BJ (cell line): ENCODE measurements at regions of chr5 and their contacts with region 1.

Region 1: DNA sequence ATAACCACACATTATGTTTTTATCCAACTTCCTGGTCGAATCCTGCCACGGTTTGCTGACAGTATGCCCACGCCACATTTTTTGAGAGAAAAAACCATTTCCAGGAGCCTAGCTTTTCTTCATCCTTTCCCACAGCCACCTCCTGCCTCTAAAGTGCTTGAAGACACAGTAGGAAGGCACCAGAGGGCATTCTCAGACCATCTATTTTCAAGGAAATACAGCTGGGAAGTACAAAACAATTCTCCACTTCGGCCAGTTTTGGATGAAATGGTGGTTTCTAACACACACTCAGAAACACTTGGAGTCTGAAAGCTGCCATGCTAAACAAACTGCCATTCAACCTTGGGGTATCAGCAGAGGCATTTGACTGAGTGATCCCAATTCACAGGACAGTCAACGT is 86.3 kb upstream of the RPS23 start:
- DNase-seq: no peak
- H3K4me3 ChIP-seq: no peak overlapping the region
- H3K27me3 ChIP-seq: no peaks in the 10 kb centered on the region
- CTCF ChIP-seq: peak; percentile 63

Region 2: DNA sequence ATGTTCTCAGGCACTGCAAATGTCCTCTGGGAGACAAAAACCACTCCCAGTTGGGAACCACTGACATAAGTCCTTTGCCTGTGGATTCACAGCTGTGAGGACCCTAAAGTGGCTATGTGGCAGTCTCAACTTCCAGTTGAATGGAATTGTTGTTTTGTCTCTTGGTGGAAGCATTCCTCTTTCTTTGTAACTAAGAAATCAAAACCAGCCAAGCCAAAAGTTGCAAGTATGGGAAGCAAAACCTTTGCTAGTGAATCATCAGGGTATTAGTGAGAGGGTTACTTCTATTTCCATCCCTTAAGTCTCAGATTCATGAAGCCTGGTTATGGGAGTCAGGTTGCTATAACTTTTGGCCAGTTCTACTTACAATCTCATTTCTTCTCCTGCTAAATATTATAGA is 36.6 kb before region 1 on chr5:
- CTCF ChIA-PET with region 1: no interaction called
- POLR2A ChIA-PET with region 1: no interaction called
- DNase-seq: no peak
- H3K4me3 ChIP-seq: no peak overlapping the region
- H3K27me3 ChIP-seq: peaks cover 2% of the 10 kb centered on the region
- CTCF ChIP-seq: no peak

Region 3: DNA sequence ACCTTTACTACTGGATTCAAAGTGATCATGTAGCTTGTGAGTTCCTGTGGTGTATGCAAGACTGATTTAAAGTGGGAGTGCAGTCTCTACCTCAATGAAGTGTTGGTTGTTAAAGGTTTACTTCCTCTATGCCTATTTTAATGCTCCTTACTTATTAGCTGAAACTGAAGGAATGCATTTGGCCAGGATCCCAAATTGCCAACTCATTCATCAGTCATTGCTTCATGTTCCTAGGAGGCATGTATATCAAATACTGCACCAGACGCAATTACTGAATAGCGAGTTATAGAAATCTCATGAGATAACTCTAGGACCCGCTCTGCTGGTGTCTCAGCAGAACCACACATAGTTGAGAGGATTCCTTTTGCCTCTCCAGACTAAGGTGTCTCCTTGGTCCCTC is 56.6 kb after region 1 on chr5:
- CTCF ChIA-PET with region 1: interaction called, 22 read pairs
- POLR2A ChIA-PET with region 1: no interaction called
- DNase-seq: peak; percentile 43
- H3K4me3 ChIP-seq: no peak overlapping the region
- H3K27me3 ChIP-seq: no peaks in the 10 kb centered on the region
- CTCF ChIP-seq: 0 out of 2 replicates have a peak, but pooled peaks have one; percentile 15

Region 4: GRCh38 chr5:82494942-82495341 is 130.4 kb after region 1 on chr5:
- CTCF ChIA-PET with region 1: interaction called, 11 read pairs
- POLR2A ChIA-PET with region 1: no interaction called
- DNase-seq: no peak
- H3K4me3 ChIP-seq: no peak overlapping the region
- H3K27me3 ChIP-seq: no peaks in the 10 kb centered on the region
- CTCF ChIP-seq: peak; percentile 39

Region 5: GRCh38 chr5:83564069-83564749 is 1199.7 kb after region 1 on chr5:
- CTCF ChIA-PET with region 1: interaction called, 11 read pairs
- POLR2A ChIA-PET with region 1: no interaction called
- DNase-seq: no peak
- H3K4me3 ChIP-seq: no peak overlapping the region
- H3K27me3 ChIP-seq: no peaks in the 10 kb centered on the region
- CTCF ChIP-seq: peak; percentile 40